Panc1 (cell line): ENCODE measurements at regions of chr16 and their contacts with region 1.

Region 1: GRCh38 chr16:28901862-28902459 is 23.1 kb downstream of the RABEP2 start:
- DNase-seq: no peak
- ATAC-seq: no peak
- H3K4me3 ChIP-seq: no peak overlapping the region
- H3K27ac ChIP-seq: no peak overlapping the region
- H3K4me1 ChIP-seq: no peaks in the 10 kb centered on the region
- H3K27me3 ChIP-seq: no peaks in the 10 kb centered on the region
- CTCF ChIP-seq: no peak

Region 2: GRCh38 chr16:28820016-28820415 is 81.9 kb before region 1 on chr16:
- CTCF ChIA-PET with region 1: no interaction called
- POLR2A ChIA-PET with region 1: no interaction called
- in situ Hi-C with region 1: no loop called
- intact Hi-C with region 1: no loop called
- DNase-seq: no peak
- ATAC-seq: no peak
- H3K4me3 ChIP-seq: no peak overlapping the region
- H3K27ac ChIP-seq: no peak overlapping the region
- H3K4me1 ChIP-seq: peaks cover 9% of the 10 kb centered on the region
- H3K27me3 ChIP-seq: no peaks in the 10 kb centered on the region
- CTCF ChIP-seq: no peak

Region 3: DNA sequence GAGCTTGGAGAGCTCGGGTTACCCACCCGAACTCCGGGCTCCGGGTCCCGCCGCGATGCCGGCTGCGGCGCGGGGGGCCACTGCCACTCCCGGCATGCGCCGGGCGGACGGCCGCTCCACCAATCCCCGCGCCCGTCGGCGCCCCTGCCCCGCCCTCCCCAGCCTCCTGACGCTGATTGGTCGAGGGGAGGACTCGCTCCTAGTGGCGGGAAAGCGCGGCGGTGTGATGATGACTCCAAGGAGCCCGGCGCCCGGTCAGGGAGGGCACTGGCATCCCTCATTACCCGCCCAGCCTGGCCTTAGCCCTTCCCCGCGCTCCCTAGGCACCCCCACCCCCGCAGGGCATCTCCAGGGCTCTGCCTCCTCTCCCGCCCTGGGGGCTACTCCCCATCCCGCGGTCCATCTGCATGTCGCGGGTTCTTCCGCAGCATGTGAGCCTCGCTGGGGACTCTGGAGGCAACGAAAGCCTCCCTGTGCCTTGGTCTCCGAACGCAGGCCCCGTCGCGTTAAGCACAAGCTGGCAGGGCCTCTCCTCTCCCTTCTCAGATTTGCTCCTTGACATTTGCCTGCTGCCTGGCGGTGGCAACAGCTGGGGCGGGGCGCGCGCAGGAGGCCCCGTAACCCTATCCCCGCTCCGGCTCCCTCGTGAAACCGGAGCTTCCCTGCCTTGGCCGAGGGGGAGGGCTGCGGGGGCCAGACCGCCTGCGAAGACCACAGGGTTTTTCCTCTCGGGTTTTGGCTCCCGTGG is 21.9 kb before region 1 on chr16:
- CTCF ChIA-PET with region 1: no interaction called
- POLR2A ChIA-PET with region 1: no interaction called
- in situ Hi-C with region 1: no loop called
- intact Hi-C with region 1: no loop called
- DNase-seq: peak; percentile 30
- ATAC-seq: peak; percentile 92
- H3K4me3 ChIP-seq: peak overlapping the region; percentile 70 to 76
- H3K27ac ChIP-seq: peak overlapping the region; percentile 77
- H3K4me1 ChIP-seq: peaks cover 31% of the 10 kb centered on the region
- H3K27me3 ChIP-seq: no peaks in the 10 kb centered on the region
- CTCF ChIP-seq: no peak

Region 4: DNA sequence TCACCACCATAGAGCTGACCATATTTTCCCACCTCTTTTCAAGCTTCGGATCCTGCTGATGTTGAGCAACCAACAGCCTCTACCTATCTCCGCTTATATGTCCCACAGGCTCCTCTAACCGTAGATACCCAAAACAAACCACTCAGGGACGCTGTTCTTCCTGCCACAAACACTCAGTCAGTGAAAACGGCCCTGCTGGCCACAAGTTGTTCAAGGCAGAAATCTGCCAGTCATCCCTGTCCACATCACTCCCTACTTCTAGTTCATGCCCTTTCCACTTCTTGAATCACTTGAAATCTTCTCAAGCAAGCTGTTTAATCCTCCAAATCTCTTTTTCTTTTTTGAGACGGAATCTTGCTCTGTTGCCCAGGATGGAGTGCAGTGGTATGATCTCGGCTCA is 15.1 kb after region 1 on chr16:
- CTCF ChIA-PET with region 1: interaction called, 5 read pairs
- POLR2A ChIA-PET with region 1: interaction called, 12 read pairs
- in situ Hi-C with region 1: no loop called
- intact Hi-C with region 1: no loop called
- DNase-seq: no peak
- ATAC-seq: no peak
- H3K4me3 ChIP-seq: no peak overlapping the region
- H3K27ac ChIP-seq: no peak overlapping the region
- H3K4me1 ChIP-seq: no peaks in the 10 kb centered on the region
- H3K27me3 ChIP-seq: no peaks in the 10 kb centered on the region
- CTCF ChIP-seq: no peak